CD4-positive, alpha-beta memory T cell (primary cell): ENCODE measurements at regions of chr13 and their contacts with region 1.

Region 1: GRCh38 chr13:74133657-74134201 is 475 bp downstream of the KLF12 start:
- DNase-seq: peak; percentile 89 to 98 (median 95)
- H3K4me3 ChIP-seq: peak overlapping the region; percentile 86 to 90
- H3K4me3 Mint-ChIP-seq: peak overlapping the region; percentile 96 to 100 (median 98)
- H3K27ac ChIP-seq: peak overlapping the region; percentile 94
- H3K27ac Mint-ChIP-seq: peak overlapping the region; percentile 97 to 100 (median 99)
- H3K4me1 ChIP-seq: peaks cover 41% of the 10 kb centered on the region
- H3K4me1 Mint-ChIP-seq: peaks cover 22 to 49% (median 28%) of the 10 kb centered on the region in 4 donors
- H3K27me3 ChIP-seq: no peaks in the 10 kb centered on the region
- H3K27me3 Mint-ChIP-seq: peaks cover 1 to 3% of the 10 kb centered on the region in 2 donors

Region 2: GRCh38 chr13:72727417-72728289 is 1406.1 kb before region 1 on chr13 and contains the starts of genes BORA and MZT1:
- CTCF ChIA-PET with region 1: no interaction called
- POLR2A ChIA-PET with region 1: no interaction called
- intact Hi-C with region 1: loop called (anchors 10 kb)
- DNase-seq: peak; percentile 93 to 96 (median 95)
- H3K4me3 ChIP-seq: peak within 1 kb of the TSS; percentile 82 to 99
- H3K4me3 Mint-ChIP-seq: peak within 1 kb of the TSS; percentile 94 to 98 (median 96)
- H3K27ac ChIP-seq: peak within 1 kb of the TSS; percentile 64
- H3K27ac Mint-ChIP-seq: peak within 1 kb of the TSS; percentile 87 to 97 (median 94)
- H3K4me1 ChIP-seq: peaks cover 32% of the 10 kb centered on the region
- H3K4me1 Mint-ChIP-seq: peaks cover 29 to 60% (median 45%) of the 10 kb centered on the region in 4 donors
- H3K27me3 ChIP-seq: no peaks in the 10 kb centered on the region
- H3K27me3 Mint-ChIP-seq: peaks cover 0 to 2% of the 10 kb centered on the region in 2 donors
- total RNA-seq, gene BORA: 6.1 to 7.2 TPM
- total RNA-seq, gene MZT1: 6.3 to 7.9 TPM

Region 3: GRCh38 chr13:73835138-73835721 is 298.5 kb before region 1 on chr13:
- CTCF ChIA-PET with region 1: interaction called, 3 read pairs
- POLR2A ChIA-PET with region 1: interaction called, 4 read pairs
- intact Hi-C with region 1: loop called (anchors 1 kb)
- DNase-seq: peak in 4 of 5 donors; percentile 45 to 56 (median 49)
- H3K4me3 ChIP-seq: no peak overlapping the region
- H3K4me3 Mint-ChIP-seq: no peak overlapping the region
- H3K27ac ChIP-seq: no peak overlapping the region
- H3K27ac Mint-ChIP-seq: no peak overlapping the region
- H3K4me1 ChIP-seq: peaks cover 42% of the 10 kb centered on the region
- H3K4me1 Mint-ChIP-seq: peaks cover 34 to 69% (median 47%) of the 10 kb centered on the region in 4 donors
- H3K27me3 ChIP-seq: no peaks in the 10 kb centered on the region
- H3K27me3 Mint-ChIP-seq: no peaks in the 10 kb centered on the region

Region 4: GRCh38 chr13:73984949-73985691 is 148.6 kb before region 1 on chr13:
- CTCF ChIA-PET with region 1: interaction called, 9 read pairs
- POLR2A ChIA-PET with region 1: interaction called, 25 read pairs
- intact Hi-C with region 1: loop called (anchors 2 kb)
- DNase-seq: peak; percentile 74 to 90 (median 82)
- H3K4me3 ChIP-seq: peak overlapping the region; percentile 34 to 46
- H3K4me3 Mint-ChIP-seq: peak overlapping the region; percentile 65 to 89 (median 80)
- H3K27ac ChIP-seq: peak overlapping the region; percentile 42
- H3K27ac Mint-ChIP-seq: peak overlapping the region in 4 of 7 donors; percentile 93 to 95 (median 94)
- H3K4me1 ChIP-seq: peaks cover 76% of the 10 kb centered on the region
- H3K4me1 Mint-ChIP-seq: peaks cover 35 to 50% (median 47%) of the 10 kb centered on the region in 4 donors
- H3K27me3 ChIP-seq: no peaks in the 10 kb centered on the region
- H3K27me3 Mint-ChIP-seq: no peaks in the 10 kb centered on the region

Region 5: DNA sequence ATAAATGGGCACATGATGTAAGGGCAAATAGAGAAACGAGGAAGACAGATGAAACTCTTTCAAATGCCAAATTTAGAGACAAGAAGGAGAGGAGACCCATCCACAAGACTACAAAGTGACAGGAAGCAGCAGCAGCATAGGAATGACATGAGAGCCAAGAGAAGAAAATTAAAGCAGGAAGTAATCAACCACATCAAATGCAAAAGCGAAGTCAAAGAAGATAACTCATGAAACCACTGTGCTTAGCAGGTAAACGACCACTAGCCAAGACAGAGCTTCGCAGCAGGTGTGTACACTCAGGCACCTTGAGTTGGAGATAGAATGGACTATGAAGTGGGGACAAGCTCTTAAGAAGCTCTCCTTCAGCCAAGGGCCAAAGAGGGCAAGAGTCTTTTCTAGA is 63.7 kb before region 1 on chr13:
- CTCF ChIA-PET with region 1: interaction called, 3 read pairs
- POLR2A ChIA-PET with region 1: interaction called, 51 read pairs
- intact Hi-C with region 1: loop called (anchors 1 kb)
- DNase-seq: peak; percentile 73 to 81 (median 75)
- H3K4me3 ChIP-seq: peak overlapping the region in 1 of 2 donors; percentile 43
- H3K4me3 Mint-ChIP-seq: peak overlapping the region; percentile 68 to 89 (median 79)
- H3K27ac ChIP-seq: peak overlapping the region; percentile 15
- H3K27ac Mint-ChIP-seq: peak overlapping the region; percentile 73 to 94 (median 89)
- H3K4me1 ChIP-seq: peaks cover 92% of the 10 kb centered on the region
- H3K4me1 Mint-ChIP-seq: peaks cover 64 to 85% (median 77%) of the 10 kb centered on the region in 4 donors
- H3K27me3 ChIP-seq: no peaks in the 10 kb centered on the region
- H3K27me3 Mint-ChIP-seq: no peaks in the 10 kb centered on the region

Region 6: DNA sequence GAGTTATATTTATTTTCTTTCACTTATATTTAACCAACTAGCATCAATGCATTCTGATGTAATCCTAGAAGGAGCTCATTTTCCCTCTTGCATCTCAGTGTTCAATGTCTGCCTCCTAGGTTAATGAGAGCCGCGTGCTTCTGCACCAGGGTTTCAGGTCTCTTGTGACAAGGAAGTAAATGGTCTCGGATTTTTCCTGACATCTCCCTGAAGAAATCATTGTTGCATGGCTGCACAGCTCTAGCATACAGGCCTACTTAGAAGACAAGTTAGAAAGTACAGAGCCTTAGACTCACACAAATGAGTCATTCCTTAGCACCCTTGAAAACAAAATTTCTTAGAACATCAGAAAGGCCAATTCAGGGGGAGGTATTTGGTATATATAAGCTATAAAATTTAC is 57.7 kb after region 1 on chr13:
- CTCF ChIA-PET with region 1: no interaction called
- POLR2A ChIA-PET with region 1: interaction called, 6 read pairs
- intact Hi-C with region 1: loop called (anchors 2 kb)
- DNase-seq: no peak
- H3K4me3 ChIP-seq: no peak overlapping the region
- H3K4me3 Mint-ChIP-seq: no peak overlapping the region
- H3K27ac ChIP-seq: no peak overlapping the region
- H3K27ac Mint-ChIP-seq: no peak overlapping the region
- H3K4me1 ChIP-seq: peaks cover 12% of the 10 kb centered on the region
- H3K4me1 Mint-ChIP-seq: peaks cover 17 to 28% (median 19%) of the 10 kb centered on the region in 4 donors
- H3K27me3 ChIP-seq: no peaks in the 10 kb centered on the region
- H3K27me3 Mint-ChIP-seq: no peaks in the 10 kb centered on the region

Region 7: DNA sequence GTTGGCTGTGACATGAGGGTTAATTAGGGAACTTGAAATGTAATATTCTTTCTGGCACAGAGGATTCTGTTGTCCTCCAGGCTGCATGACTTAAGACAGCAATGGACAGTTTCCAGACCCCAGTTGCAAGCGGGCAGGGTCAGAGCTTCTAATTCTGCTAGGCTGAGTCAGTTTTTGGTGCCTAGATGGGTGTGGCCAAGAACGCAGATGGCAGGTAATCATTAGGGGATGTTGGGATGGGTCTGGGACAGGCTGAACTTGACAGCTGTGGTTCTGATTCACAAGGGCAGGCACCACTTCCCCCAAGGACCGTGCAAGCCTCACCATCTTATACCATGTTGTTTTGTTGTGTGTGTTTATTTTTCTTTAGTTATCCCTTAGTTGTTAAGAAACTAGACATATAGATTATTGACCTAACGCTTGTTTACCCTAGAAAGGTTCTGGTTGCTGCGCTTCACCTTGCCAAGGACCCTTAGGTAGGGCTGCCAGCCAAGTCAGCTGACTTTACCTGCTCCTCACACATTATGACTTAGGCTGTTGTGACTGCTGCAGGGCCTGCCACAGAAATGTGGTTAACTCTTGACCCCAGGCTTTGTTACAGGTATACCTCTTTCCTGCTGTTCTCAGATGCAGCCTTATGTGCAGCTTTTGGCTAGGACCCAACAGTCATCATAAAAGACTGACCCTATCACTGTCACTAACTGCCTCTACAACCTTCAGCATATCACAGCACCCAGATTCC is 118.2 kb after region 1 on chr13:
- CTCF ChIA-PET with region 1: interaction called, 3 read pairs
- POLR2A ChIA-PET with region 1: interaction called, 115 read pairs
- intact Hi-C with region 1: no loop called
- DNase-seq: no peak
- H3K4me3 ChIP-seq: no peak overlapping the region
- H3K4me3 Mint-ChIP-seq: peak overlapping the region in 7 of 8 donors; percentile 15 to 89 (median 62)
- H3K27ac ChIP-seq: no peak overlapping the region
- H3K27ac Mint-ChIP-seq: peak overlapping the region; percentile 31 to 87 (median 74)
- H3K4me1 ChIP-seq: peaks cover 96% of the 10 kb centered on the region
- H3K4me1 Mint-ChIP-seq: peaks cover 69 to 95% (median 82%) of the 10 kb centered on the region in 4 donors
- H3K27me3 ChIP-seq: no peaks in the 10 kb centered on the region
- H3K27me3 Mint-ChIP-seq: no peaks in the 10 kb centered on the region